Head of caudate nucleus (tissue), 42 donors: ENCODE measurements at regions of chr7 and their contacts with region 1.

Region 1: GRCh38 chr7:7681179-7681935 is 37.0 kb downstream of the RPA3 start:
- DNase-seq: peak in 20 of 42 donors; percentile 8 to 86 (median 59)

Region 2: DNA sequence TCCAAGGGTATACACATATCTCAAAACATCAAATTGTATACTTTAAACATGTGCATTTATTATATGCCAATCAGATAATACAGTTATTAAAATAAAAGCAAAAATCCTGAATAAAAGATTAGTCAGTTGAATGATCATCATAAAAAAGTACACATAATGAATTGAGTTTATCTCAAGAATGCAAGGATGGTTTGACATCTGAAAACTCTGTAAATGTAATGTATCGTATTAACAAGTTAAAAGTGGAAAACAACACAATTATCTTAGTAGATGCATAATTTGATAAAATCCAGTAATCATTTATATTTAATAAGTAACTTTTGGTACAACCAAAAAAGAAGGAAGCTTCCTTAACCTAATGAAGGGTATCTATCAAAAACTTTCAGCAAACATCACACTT is 232.3 kb before region 1 on chr7:
- intact Hi-C with region 1: no loop called
- DNase-seq: no peak

Region 3: DNA sequence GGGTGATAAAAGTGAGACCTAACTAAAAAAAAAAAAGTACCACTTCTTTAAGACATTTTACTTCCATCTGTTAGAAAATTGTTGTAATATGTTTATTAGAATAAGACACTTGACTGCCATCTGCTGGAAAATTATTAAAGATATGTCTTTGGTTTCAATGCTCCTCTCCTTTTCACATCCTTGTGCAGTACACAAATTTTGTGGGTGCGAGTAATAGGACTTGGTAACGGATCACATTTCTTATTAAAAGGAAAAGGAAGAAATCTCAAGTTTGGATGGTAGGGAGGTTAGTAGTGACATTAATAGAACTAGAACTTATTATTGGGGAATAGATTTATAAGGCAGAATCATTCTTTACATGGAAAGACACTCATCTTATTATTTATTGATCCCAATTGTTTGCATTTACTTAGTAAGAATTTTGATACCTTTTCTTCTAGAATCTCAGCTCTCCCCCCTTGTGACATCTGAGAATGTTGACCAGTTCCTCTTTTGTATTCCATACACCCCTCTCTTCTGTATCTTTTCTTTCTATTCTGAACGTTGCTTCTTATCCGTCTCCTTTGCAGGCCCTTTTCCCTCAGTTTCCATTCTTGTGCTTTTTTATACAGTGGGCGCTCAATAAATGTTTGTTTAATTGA is 80.1 kb after region 1 on chr7:
- intact Hi-C with region 1: loop called (anchors 10 kb)
- DNase-seq: no peak

Region 4: GRCh38 chr7:8217200-8218068 is 536.1 kb after region 1 on chr7:
- intact Hi-C with region 1: loop called (anchors 5 kb)
- DNase-seq: peak in 7 of 42 donors; percentile 24 to 74 (median 53)